ENCODE measurements at regions of chr6 and their contacts with region 1.

Region 1: DNA sequence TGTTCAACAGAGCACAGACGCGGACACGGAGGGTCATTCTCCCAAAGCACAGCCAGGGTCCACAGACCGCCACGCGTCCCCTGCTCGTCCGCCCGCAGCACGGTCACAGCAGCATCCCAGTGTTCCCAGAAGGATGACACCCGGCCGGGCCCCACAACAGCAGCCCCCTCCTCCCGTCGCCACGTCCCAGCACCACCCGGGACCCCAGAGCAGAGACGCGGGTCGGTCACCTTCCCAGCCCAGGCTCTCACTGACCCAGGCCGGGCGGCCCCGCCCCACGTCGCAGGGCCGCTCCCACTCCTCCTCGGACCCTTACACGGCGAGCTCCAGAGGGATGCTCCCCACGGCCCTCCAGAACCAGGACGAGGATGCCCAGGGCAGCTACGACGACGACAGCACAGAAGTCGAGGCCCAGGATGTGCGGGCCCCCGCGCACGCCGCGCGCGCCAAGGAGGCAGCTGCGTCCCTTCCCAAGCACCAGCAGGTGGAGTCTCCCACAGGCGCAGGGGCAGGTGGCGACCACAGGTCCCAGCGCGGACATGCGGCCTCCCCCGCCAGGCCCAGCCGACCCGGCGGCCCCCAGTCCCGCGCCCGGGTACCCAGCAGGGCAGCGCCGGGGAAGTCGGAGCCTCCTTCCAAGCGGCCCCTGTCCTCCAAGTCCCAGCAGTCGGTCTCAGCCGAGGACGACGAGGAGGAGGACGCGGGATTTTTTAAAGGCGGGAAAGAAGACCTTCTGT is 64.3 kb downstream of the FNDC1 start:
- DNase-seq: no peak
- H3K4me3 ChIP-seq: peak overlapping the region in 39 of 59 donors; percentile 9 to 60 (median 30)
- H3K27ac ChIP-seq: no peak overlapping the region
- H3K27me3 ChIP-seq: peaks cover 0 to 80% (median 46%) of the 10 kb centered on the region in 45 donors
- CTCF ChIP-seq: peak in 3 of 56 donors; percentile 8 to 17 (median 12)

Region 2: GRCh38 chr6:159203304-159204005 is 30.1 kb before region 1 on chr6:
- intact Hi-C with region 1: no loop called
- DNase-seq: no peak
- H3K4me3 ChIP-seq: no peak overlapping the region
- H3K27ac ChIP-seq: no peak overlapping the region
- H3K27me3 ChIP-seq: peaks cover 0 to 13% (median 0%) of the 10 kb centered on the region in 45 donors
- CTCF ChIP-seq: no peak

Region 3: GRCh38 chr6:159440911-159441703 is 207.6 kb after region 1 on chr6:
- intact Hi-C with region 1: loop called in 1 of 2 experiments (anchors 10 kb)
- DNase-seq: no peak
- H3K4me3 ChIP-seq: no peak overlapping the region
- H3K27ac ChIP-seq: no peak overlapping the region
- H3K27me3 ChIP-seq: peaks cover 0 to 50% (median 20%) of the 10 kb centered on the region in 45 donors
- CTCF ChIP-seq: no peak

Region 4: GRCh38 chr6:159456349-159456748 is 222.8 kb after region 1 on chr6:
- intact Hi-C with region 1: no loop called
- DNase-seq: no peak
- H3K4me3 ChIP-seq: no peak overlapping the region
- H3K27ac ChIP-seq: no peak overlapping the region
- H3K27me3 ChIP-seq: peaks cover 0 to 13% (median 0%) of the 10 kb centered on the region in 45 donors
- CTCF ChIP-seq: no peak

Region 5: GRCh38 chr6:159525445-159526025 is 292.0 kb after region 1 on chr6:
- intact Hi-C with region 1: no loop called
- DNase-seq: no peak
- H3K4me3 ChIP-seq: no peak overlapping the region
- H3K27ac ChIP-seq: no peak overlapping the region
- H3K27me3 ChIP-seq: peaks cover 0 to 40% (median 7%) of the 10 kb centered on the region in 45 donors
- CTCF ChIP-seq: no peak

Measured in dorsolateral prefrontal cortex (tissue), 120 donors.